Activated CD4-positive, alpha-beta memory T cell treated with anti-CD3 and anti-CD28 coated beads for 36 hours (primary cell): ENCODE measurements at regions of chr1 and their contacts with region 1.

Region 1: DNA sequence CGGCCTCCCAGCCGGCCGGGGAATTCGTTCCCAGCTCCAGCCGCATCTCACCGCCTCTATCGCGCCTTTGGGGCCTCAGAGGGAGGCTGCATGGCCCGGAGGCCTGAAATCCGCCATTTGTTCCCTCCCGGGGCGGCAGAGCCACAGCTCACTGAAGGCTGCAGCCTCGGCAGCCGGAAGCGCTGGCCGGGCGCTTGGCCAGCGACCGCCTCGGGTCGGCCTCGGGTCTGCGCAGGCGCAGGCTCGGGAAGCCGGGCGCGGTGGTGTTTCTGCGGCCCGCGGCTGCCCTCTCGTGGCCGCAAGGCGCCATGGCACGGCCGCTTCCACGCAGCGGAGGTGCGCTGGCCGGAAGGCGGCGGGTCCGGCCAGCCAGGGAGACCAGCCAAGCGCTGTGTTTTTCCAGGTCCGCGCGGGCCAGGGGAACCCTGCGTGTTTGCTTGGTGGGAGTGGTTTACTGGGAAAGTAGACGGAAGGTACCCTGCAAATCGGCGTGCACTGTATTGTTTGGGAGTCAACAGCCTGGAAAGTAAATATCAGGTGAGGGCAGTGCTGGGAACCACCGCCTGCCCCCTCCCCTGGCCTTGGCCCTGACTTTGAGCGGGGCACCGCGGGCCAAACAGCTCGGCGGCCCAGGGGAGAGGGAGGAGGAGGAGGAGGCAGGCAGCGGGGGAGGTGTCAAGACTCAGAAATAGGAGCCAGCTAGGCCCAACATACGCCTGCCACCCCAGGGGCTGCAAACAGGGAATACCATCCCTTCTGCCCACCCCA is 52.7 kb upstream of the CD34 start:
- DNase-seq: peak; percentile 89
- H3K4me3 Mint-ChIP-seq: peak overlapping the region; percentile 81
- H3K27ac Mint-ChIP-seq: no peak overlapping the region
- H3K4me1 Mint-ChIP-seq: peaks cover 9% of the 10 kb centered on the region
- H3K27me3 Mint-ChIP-seq: peaks cover 24% of the 10 kb centered on the region

Region 2: DNA sequence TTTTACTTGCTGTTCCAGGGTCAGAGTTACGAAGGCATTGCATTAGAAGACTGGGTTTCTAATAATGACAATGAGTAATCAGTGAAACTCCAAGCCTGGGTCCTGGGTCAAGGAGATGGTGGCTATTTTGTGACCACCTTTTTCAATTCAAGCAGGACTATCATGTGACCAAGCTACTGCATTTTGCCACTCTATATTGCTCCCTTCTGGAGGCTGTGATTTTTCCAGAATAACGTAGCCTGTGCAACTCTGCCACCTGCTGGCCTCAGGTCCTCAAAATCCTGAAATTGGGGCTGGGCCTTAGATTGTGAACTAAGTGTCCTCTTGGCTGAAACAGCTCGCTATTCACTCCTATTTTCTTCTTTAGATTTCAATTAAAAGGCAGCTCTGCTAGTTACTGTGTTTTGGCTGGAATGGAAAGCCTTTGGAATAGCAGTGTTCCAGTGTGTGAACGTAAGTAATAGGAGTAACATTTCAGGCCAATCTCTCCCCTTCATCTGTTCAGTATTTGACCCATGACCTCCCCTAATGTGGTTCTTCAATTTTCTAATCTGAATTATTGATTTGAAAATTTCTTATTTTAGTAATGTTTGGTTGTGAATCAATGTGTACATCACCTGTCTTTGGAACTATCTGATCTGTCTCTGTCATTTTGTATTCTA is 264.7 kb before region 1 on chr1:
- CTCF ChIA-PET with region 1: no interaction called
- POLR2A ChIA-PET with region 1: no interaction called
- intact Hi-C with region 1: loop called (anchors 10 kb)
- DNase-seq: peak; percentile 66
- H3K4me3 Mint-ChIP-seq: no peak overlapping the region
- H3K27ac Mint-ChIP-seq: no peak overlapping the region
- H3K4me1 Mint-ChIP-seq: no peaks in the 10 kb centered on the region
- H3K27me3 Mint-ChIP-seq: peaks cover 13% of the 10 kb centered on the region

Region 3: GRCh38 chr1:207797229-207797961 is 166.2 kb before region 1 on chr1:
- CTCF ChIA-PET with region 1: interaction called, 59 read pairs
- POLR2A ChIA-PET with region 1: no interaction called
- intact Hi-C with region 1: loop called (anchors 2 kb)
- DNase-seq: peak; percentile 90
- H3K4me3 Mint-ChIP-seq: no peak overlapping the region
- H3K27ac Mint-ChIP-seq: peak overlapping the region; percentile 64
- H3K4me1 Mint-ChIP-seq: peaks cover 36% of the 10 kb centered on the region
- H3K27me3 Mint-ChIP-seq: no peaks in the 10 kb centered on the region

Region 4: DNA sequence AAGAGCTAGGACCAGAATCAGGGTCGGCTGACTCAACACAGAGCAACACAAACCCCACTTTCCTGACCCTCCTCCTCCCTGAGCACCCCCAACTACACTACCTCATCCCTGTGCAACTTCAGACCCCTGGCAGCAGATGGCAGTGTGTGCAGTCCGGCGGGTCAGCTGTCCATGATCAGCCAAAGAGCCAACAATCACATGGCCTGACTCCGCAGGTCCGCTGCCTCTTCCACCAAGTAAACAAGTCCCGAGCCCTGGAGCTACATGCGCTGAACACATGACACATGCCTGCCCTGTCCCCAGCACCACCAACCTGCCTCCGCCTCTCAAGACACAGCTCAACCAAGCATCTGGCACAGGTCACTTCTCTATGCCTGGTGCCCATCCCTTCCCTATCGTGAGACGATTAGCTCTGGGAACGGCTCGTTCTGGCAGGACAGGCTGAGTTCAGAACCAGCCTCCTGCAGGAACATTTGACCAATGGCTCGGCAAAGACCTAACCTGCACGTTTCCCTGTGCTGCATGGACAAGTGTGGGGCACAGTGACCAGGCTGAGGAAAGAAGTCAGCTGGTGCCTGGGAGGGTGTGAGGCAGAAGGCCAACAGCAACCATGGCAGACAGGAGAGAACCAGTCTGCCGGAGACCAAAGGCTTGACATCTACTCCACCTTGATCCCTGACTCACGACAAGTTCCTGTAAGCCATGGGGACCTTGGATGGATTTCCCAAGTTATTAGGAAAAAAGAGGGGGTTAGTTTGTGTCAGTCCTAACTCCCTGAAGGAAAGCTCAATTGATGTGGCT is 151.5 kb before region 1 on chr1:
- CTCF ChIA-PET with region 1: interaction called, 17 read pairs
- POLR2A ChIA-PET with region 1: no interaction called
- intact Hi-C with region 1: no loop called
- DNase-seq: no peak
- H3K4me3 Mint-ChIP-seq: no peak overlapping the region
- H3K27ac Mint-ChIP-seq: peak overlapping the region; percentile 74
- H3K4me1 Mint-ChIP-seq: peaks cover 86% of the 10 kb centered on the region
- H3K27me3 Mint-ChIP-seq: no peaks in the 10 kb centered on the region

Region 5: GRCh38 chr1:207897188-207897587 is 66.4 kb before region 1 on chr1:
- CTCF ChIA-PET with region 1: interaction called, 15 read pairs
- POLR2A ChIA-PET with region 1: interaction called, 3 read pairs
- intact Hi-C with region 1: loop called (anchors 2 kb)
- DNase-seq: no peak
- H3K4me3 Mint-ChIP-seq: no peak overlapping the region
- H3K27ac Mint-ChIP-seq: no peak overlapping the region
- H3K4me1 Mint-ChIP-seq: no peaks in the 10 kb centered on the region
- H3K27me3 Mint-ChIP-seq: no peaks in the 10 kb centered on the region

Region 6: GRCh38 chr1:207952617-207953542 is 10.7 kb before region 1 on chr1:
- CTCF ChIA-PET with region 1: interaction called, 23 read pairs
- POLR2A ChIA-PET with region 1: no interaction called
- intact Hi-C with region 1: no loop called
- DNase-seq: no peak
- H3K4me3 Mint-ChIP-seq: no peak overlapping the region
- H3K27ac Mint-ChIP-seq: no peak overlapping the region
- H3K4me1 Mint-ChIP-seq: no peaks in the 10 kb centered on the region
- H3K27me3 Mint-ChIP-seq: peaks cover 29% of the 10 kb centered on the region

Region 7: GRCh38 chr1:207997486-207998268 is 34.1 kb after region 1 on chr1:
- CTCF ChIA-PET with region 1: interaction called, 12 read pairs
- POLR2A ChIA-PET with region 1: no interaction called
- intact Hi-C with region 1: no loop called
- DNase-seq: peak; percentile 62
- H3K4me3 Mint-ChIP-seq: no peak overlapping the region
- H3K27ac Mint-ChIP-seq: no peak overlapping the region
- H3K4me1 Mint-ChIP-seq: no peaks in the 10 kb centered on the region
- H3K27me3 Mint-ChIP-seq: peaks cover 8% of the 10 kb centered on the region

Region 8: GRCh38 chr1:208059409-208059995 is 95.9 kb after region 1 on chr1:
- CTCF ChIA-PET with region 1: no interaction called
- POLR2A ChIA-PET with region 1: no interaction called
- intact Hi-C with region 1: no loop called
- DNase-seq: no peak
- H3K4me3 Mint-ChIP-seq: no peak overlapping the region
- H3K27ac Mint-ChIP-seq: no peak overlapping the region
- H3K4me1 Mint-ChIP-seq: no peaks in the 10 kb centered on the region
- H3K27me3 Mint-ChIP-seq: peaks cover 4% of the 10 kb centered on the region

Region 9: DNA sequence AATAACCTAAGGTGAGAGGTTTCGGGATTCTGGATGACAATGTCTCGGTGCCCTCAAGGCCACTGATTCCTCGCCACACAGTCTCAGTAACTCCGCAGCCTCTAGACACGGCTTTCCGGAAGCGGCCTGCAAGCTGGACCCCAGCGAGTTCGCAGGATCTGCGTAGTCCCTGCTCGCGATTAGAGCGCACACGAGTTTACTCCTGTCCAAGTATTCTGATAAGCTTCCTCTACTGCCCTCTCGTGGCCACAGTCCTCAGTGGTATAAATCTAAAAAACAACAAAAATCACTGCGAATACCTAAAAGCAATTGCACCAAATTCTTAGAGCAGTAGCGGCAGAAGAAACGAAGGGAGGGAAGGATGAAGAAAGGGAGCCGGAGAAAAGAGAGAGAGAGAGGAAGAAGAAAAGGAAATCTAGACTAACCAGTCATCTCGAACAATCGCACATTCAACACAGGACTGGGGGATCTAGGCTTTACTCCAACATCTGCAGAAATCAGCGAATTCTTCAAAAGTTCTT is 281.6 kb after region 1 on chr1:
- CTCF ChIA-PET with region 1: no interaction called
- POLR2A ChIA-PET with region 1: no interaction called
- intact Hi-C with region 1: no loop called
- DNase-seq: peak; percentile 84
- H3K4me3 Mint-ChIP-seq: peak overlapping the region; percentile 65
- H3K27ac Mint-ChIP-seq: no peak overlapping the region
- H3K4me1 Mint-ChIP-seq: peaks cover 10% of the 10 kb centered on the region
- H3K27me3 Mint-ChIP-seq: peaks cover 21% of the 10 kb centered on the region